SK-N-SH (cell line): ENCODE measurements at regions of chr5 and their contacts with region 1.

Region 1: GRCh38 chr5:132386644-132387286 is 17.3 kb downstream of the SLC22A5 start:
- DNase-seq: peak; percentile 71
- H3K4me3 ChIP-seq: no peak overlapping the region
- H3K27ac ChIP-seq: peak overlapping the region; percentile 90; a peak in 3 of 4 replicates
- H3K4me1 ChIP-seq: peaks cover 26 to 32% of the 10 kb centered on the region in 2 experiments
- H3K27me3 ChIP-seq: no peaks in the 10 kb centered on the region
- CTCF ChIP-seq: peak; percentile 79
- EP300 ChIP-seq: no peak
- RAD21 ChIP-seq: peak; percentile 87

Region 2: GRCh38 chr5:132301344-132302271 is 85.2 kb before region 1 on chr5:
- CTCF ChIA-PET with region 1: no interaction called
- POLR2A ChIA-PET with region 1: no interaction called
- DNase-seq: no peak
- H3K4me3 ChIP-seq: no peak overlapping the region
- H3K27ac ChIP-seq: no peak overlapping the region
- H3K4me1 ChIP-seq: peaks cover 0 to 9% of the 10 kb centered on the region in 2 experiments; a peak in 1 of 4 replicates
- H3K27me3 ChIP-seq: no peaks in the 10 kb centered on the region
- CTCF ChIP-seq: no peak
- EP300 ChIP-seq: no peak
- RAD21 ChIP-seq: no peak

Region 3: GRCh38 chr5:132375957-132376356 is 10.8 kb before region 1 on chr5:
- CTCF ChIA-PET with region 1: interaction called, 13 read pairs
- POLR2A ChIA-PET with region 1: no interaction called
- DNase-seq: no peak
- H3K4me3 ChIP-seq: no peak overlapping the region
- H3K27ac ChIP-seq: no peak overlapping the region
- H3K4me1 ChIP-seq: peaks cover 0 to 7% of the 10 kb centered on the region in 2 experiments; a peak in 1 of 4 replicates
- H3K27me3 ChIP-seq: no peaks in the 10 kb centered on the region
- CTCF ChIP-seq: no peak
- EP300 ChIP-seq: no peak
- RAD21 ChIP-seq: no peak

Region 4: DNA sequence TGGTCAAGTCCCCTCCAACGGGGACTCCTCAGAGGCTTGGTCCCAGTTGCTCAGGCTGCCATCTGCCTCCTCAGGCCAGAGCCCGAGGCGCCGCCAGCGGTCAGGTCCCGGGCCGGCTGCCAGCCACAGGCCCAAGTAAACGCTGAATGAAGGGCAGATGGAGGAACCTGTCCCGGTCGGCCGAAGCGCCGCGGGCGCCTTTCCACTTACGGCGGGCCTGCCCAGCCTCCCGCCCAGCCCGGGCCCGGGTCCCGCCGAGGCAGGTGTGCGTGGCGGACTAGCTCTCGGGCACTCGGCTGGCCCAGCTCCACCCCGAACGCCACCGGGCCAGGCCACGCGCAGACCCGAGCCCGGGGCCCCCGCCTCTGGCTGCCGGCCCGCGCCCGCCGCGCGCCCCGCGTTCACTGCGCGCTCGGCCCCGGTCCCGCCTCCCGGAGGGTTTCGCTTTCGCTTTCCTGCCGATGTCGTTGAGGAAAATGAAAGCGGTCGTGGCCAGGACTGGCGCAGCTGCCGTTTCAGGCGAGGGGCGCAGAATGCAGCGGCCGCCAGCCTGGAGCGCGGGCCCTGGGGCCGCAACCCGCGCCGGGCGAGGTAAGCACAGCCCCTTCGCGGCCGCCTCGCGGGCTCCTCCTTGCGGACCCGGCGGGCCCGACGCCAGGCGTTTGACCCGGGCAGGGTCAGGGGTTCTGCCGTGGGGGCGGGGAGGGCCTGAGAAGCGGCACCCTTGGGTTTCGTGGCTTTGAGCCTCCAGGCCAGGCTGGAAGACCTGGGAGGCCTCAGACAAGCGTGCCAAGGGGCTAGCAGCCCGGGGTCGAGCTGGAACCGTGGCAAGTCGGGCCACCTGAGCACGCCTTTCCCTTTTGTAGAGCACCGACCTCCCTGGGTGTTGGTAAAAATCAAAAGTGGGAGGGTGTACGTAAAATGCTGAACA is 24.0 kb after region 1 on chr5:
- CTCF ChIA-PET with region 1: interaction called, 16 read pairs
- POLR2A ChIA-PET with region 1: no interaction called
- DNase-seq: peak; percentile 95
- H3K4me3 ChIP-seq: peak overlapping the region; percentile 71 to 76
- H3K27ac ChIP-seq: peak overlapping the region; percentile 81 to 89
- H3K4me1 ChIP-seq: peaks cover 19 to 26% of the 10 kb centered on the region in 2 experiments
- H3K27me3 ChIP-seq: no peaks in the 10 kb centered on the region
- CTCF ChIP-seq: peak; percentile 62
- EP300 ChIP-seq: 0 out of 4 replicates have a peak, but pooled peaks of 1 of the 2 experiments have one; percentile 6
- RAD21 ChIP-seq: peak; percentile 52

Region 5: DNA sequence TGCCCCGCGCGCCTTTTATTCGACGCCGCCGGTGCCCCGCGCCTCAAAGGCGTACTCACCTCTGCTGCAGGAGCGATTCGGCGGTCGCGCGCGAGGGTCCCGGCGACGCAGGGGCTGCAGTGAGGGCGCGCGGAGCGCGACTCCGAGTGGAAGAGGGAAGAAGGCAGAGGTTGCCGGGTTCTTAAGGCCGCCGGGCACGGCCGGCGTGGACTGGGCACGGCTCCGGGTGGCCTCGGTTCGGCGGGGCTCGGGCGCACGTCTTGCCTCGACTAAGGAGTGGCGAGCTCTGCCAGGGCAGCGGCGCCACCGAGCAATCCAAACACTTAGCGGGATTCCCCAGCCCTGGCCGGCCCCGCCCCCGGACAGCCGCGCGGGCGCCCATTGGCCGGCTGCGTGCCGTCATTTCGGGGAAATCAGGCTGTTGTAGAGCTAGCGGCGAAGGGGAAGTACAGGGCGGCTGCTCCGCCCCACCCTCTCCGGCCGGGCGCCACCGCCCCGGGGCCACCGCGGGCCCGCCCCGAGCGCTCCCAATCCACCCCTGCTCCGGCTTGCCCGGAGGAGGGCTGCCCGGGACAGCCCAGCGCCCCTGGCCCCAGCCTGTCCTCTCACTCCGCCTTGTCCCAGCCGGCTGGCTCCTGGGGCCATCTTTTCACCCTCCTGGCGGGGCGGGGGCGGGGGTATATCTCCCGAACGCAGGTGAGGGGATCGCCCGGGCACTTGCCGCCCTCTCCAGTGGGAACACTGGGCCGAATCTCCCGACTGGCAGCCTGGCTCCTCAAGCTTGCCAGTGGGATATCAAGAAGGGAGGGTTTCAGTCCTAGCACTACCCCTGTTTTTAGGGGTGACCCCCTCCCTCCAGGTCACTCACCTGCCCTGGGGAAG is 104.0 kb after region 1 on chr5 and contains the start of gene IRF1:
- CTCF ChIA-PET with region 1: interaction called, 189 read pairs
- POLR2A ChIA-PET with region 1: no interaction called
- DNase-seq: peak; percentile 99
- H3K4me3 ChIP-seq: peak within 1 kb of the TSS; percentile 86 to 89
- H3K27ac ChIP-seq: peak within 1 kb of the TSS; percentile 89 to 90
- H3K4me1 ChIP-seq: peaks cover 12 to 26% of the 10 kb centered on the region in 2 experiments
- H3K27me3 ChIP-seq: no peaks in the 10 kb centered on the region
- CTCF ChIP-seq: no peak; the same call in 1 of the 2 replicates
- EP300 ChIP-seq: no peak
- RAD21 ChIP-seq: no peak
- polyA plus RNA-seq, gene IRF1: 13.8 and 15.2 TPM in 2 replicates